ENCODE measurements at regions of chr1 and their contacts with region 1.

Region 1: DNA sequence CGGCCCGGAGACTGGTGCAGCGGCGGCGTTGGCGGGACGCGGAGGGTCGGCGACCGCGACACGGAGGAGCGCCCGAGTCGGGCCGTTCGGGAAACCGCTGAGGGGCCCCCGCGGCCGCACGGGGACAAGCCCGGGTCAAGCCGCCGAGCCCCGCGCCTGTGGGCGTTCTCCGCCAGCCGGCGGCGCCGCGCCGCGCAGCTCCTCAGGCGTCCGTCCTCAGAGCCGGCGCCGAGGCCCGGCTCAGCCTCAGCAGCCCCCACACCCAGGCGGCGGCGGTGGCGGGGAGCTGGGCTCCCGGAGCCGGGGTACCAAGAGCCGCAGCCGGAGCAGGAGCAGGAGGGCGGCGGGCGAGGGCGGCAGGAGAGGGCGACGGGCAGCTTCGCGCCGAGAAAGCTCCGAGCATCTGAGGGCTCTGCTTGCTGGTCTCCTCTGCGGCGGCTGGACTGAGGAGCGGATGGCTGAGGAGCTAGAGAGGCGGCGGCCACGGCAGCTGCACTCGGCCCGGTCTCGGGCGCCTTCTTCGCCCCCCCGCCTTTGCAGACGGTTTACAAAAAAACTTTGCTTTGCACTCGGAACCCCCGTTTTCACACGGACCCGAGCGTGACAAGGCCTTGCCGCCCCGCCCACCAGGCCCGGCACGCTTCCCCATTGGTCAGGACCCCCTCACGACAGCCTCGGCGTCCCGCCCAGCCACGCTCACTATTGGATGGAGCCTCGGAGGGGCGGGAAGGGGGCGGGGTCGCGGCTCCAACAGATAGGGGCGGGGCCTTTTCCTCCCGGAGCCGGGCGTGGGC is at the start of gene SLC30A1:
- DNase-seq: peak; percentile 99
- ATAC-seq: peak; percentile 97
- H3K4me3 ChIP-seq: peak within 1 kb of the TSS; percentile 66
- H3K4me3 Mint-ChIP-seq: peak within 1 kb of the TSS; percentile 88 to 96 (median 92)
- H3K27ac ChIP-seq: peak within 1 kb of the TSS; percentile 85
- H3K27ac Mint-ChIP-seq: peak within 1 kb of the TSS; percentile 72 to 93 (median 88)
- H3K4me1 ChIP-seq: peaks cover 3 to 5% of the 10 kb centered on the region in 2 donors
- H3K4me1 Mint-ChIP-seq: peaks cover 21 to 48% (median 44%) of the 10 kb centered on the region in 7 donors
- H3K27me3 ChIP-seq: no peaks in the 10 kb centered on the region
- H3K27me3 Mint-ChIP-seq: peaks cover 0 to 12% (median 0%) of the 10 kb centered on the region in 5 donors
- total RNA-seq, gene SLC30A1: 5.8 to 12.1 (median 8.8) TPM

Region 2: DNA sequence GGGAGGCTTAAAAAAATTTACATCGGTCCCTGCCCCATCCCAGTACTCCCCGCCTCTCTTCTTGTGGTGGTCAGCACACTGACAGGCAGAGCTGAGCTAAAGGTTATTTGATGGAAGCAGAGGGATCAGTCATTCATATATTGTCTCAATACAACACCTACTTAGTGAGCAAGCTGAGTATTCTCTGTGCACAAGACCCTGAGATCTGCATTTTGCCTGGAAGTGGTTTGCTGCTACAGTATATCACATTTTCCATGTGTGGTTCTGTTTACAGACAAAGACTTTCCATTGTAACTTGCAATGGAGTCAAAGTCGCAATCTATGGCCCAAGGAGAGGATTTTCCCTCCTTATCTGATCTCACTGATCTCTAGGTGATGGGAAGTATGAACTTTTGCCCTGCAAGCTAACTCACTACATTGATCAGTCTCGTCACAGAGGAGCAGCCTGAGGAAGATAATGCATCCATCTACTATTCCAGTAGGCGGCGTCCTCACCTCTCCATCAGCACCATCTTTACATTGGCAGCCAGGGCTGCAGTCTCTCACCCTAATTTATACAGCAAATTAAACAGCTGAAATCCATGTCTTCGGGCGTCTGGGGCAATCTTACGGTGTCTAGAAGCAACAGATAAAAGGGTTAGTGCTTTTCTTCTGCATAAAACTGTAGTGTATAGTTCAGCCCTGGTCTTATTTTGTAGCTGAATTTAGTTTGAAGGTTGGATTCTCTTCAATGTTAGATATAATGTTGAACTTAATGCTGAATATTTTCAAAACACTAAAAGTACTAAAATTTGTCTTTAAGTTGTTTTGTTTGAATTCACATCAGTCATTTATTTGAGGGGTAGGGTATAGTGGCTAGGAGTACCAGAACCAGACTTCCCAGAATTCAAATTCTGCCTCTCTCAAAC is 255.4 kb before region 1 on chr1:
- CTCF ChIA-PET with region 1: interaction called, 3 read pairs
- POLR2A ChIA-PET with region 1: no interaction called
- intact Hi-C with region 1: loop called (anchors 1 to 2 kb)
- DNase-seq: peak in 8 of 9 donors; percentile 55 to 75 (median 68)
- ATAC-seq: peak; percentile 84
- H3K4me3 ChIP-seq: no peak overlapping the region
- H3K4me3 Mint-ChIP-seq: no peak overlapping the region
- H3K27ac ChIP-seq: no peak overlapping the region
- H3K27ac Mint-ChIP-seq: no peak overlapping the region
- H3K4me1 ChIP-seq: peaks cover 7 to 20% of the 10 kb centered on the region in 2 donors
- H3K4me1 Mint-ChIP-seq: peaks cover 20 to 41% (median 35%) of the 10 kb centered on the region in 7 donors
- H3K27me3 ChIP-seq: no peaks in the 10 kb centered on the region
- H3K27me3 Mint-ChIP-seq: no peaks in the 10 kb centered on the region

Region 3: GRCh38 chr1:211606914-211607755 is 28.3 kb after region 1 on chr1:
- CTCF ChIA-PET with region 1: interaction called, 4 read pairs
- POLR2A ChIA-PET with region 1: interaction called, 6 read pairs
- intact Hi-C with region 1: loop called in 1 of 2 experiments (anchors 1 kb)
- DNase-seq: peak in 5 of 9 donors; percentile 10 to 24 (median 19)
- ATAC-seq: peak; percentile 87
- H3K4me3 ChIP-seq: peak overlapping the region; percentile 46
- H3K4me3 Mint-ChIP-seq: peak overlapping the region; percentile 59 to 87 (median 82)
- H3K27ac ChIP-seq: peak overlapping the region; percentile 24
- H3K27ac Mint-ChIP-seq: peak overlapping the region; percentile 65 to 93 (median 79)
- H3K4me1 ChIP-seq: peaks cover 0 to 5% of the 10 kb centered on the region in 2 donors
- H3K4me1 Mint-ChIP-seq: peaks cover 15 to 26% (median 23%) of the 10 kb centered on the region in 7 donors
- H3K27me3 ChIP-seq: no peaks in the 10 kb centered on the region
- H3K27me3 Mint-ChIP-seq: peaks cover 0 to 6% (median 0%) of the 10 kb centered on the region in 5 donors

Region 4: DNA sequence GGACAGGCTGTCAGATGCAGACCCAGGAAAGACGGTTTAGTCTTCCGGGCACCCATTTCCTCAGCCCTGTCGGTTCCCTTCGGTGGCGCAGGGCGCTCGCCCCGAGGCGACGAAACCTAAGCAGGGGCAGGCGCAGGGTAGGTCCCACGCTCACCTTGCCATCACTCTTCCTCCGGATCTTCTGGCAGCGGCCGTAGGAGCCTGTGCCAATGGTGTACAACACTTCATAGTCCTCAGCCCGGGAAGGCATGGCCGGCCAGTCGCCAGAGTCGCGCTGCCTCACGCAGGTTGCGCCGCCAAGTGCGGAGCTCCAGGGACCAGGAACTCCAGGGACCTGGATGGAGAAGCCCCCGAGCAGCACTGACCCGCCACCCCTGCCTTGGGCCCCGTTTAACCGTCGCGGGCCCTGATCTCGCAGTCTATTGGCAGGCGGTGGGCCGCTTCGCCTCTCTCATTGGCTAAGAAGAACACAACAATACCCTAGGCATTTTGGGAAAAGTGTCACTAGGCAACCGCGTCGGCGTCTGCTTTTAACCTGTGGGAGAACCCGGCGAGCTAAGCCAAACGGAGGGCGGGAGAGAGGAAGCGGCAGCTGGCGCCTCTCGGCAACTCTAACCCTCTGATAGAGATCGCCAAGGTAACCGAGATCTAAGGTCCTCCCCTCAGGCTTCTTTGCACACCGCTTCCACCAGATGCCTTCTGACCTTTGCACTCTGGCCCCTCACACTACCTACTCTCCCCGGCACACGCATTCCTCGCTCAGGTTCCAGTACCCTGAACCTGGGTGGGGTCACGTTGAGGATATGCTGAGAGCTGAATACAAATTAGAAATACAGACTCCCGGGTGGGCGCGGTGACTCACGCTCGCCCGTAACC is 96.6 kb after region 1 on chr1 and contains the start of gene NEK2:
- CTCF ChIA-PET with region 1: no interaction called
- POLR2A ChIA-PET with region 1: no interaction called
- intact Hi-C with region 1: loop called (anchors 1 kb)
- DNase-seq: peak; percentile 53 to 90 (median 85)
- ATAC-seq: peak; percentile 97
- H3K4me3 ChIP-seq: peak within 1 kb of the TSS; percentile 76
- H3K4me3 Mint-ChIP-seq: peak within 1 kb of the TSS; percentile 88 to 96 (median 92)
- H3K27ac ChIP-seq: peak within 1 kb of the TSS; percentile 56
- H3K27ac Mint-ChIP-seq: peak within 1 kb of the TSS; percentile 45 to 88 (median 80)
- H3K4me1 ChIP-seq: peaks cover 5 to 7% of the 10 kb centered on the region in 2 donors
- H3K4me1 Mint-ChIP-seq: peaks cover 8 to 38% (median 13%) of the 10 kb centered on the region in 7 donors
- H3K27me3 ChIP-seq: no peaks in the 10 kb centered on the region
- H3K27me3 Mint-ChIP-seq: no peaks in the 10 kb centered on the region
- total RNA-seq, gene NEK2: 0.16 to 26.5 (median 0.25) TPM in 4 of 5 experiments, not detected in the other

Region 5: DNA sequence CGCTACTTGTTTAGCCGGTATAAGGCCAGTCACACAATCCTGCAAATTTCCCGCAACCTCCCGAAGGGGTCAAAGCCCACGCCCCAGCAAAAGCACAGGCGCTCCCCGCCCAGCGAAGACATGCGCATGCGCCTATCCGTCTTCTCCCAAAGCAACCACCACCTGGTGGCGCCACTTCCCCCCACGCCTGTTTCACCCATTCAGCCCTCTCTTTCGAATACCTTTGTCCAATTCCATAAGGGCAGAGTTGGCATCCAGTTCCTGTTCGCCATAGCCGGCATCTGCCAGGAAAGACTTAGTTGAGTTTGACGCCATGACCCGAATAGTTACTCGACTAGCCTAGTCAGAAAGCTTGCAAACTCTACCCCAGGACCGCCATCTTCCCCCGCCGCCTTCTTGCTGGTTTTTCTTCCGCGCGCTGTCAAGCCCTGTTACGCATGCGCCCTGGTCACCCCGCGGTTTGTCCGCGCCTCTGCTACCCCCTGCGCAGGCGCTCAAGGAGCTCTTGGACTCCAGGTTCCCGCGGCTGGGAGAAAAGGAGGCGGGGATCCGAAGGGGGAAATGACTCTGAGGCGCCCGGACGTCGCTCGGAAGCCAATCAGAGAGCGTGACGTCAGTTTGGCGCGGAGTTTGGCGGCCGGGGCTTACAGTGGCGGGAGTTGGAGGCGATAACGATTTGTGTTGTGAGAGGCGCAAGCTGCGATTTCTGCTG is 456.4 kb after region 1 on chr1 and contains the starts of genes DTL and INTS7:
- CTCF ChIA-PET with region 1: no interaction called
- POLR2A ChIA-PET with region 1: no interaction called
- intact Hi-C with region 1: loop called (anchors 1 kb)
- DNase-seq: peak; percentile 94 to 99 (median 99)
- ATAC-seq: peak; percentile 93
- H3K4me3 ChIP-seq: peak within 1 kb of the TSS; percentile 99
- H3K4me3 Mint-ChIP-seq: peak within 1 kb of the TSS; percentile 86 to 100 (median 98)
- H3K27ac ChIP-seq: peak within 1 kb of the TSS; percentile 70
- H3K27ac Mint-ChIP-seq: peak within 1 kb of the TSS; percentile 95 to 99 (median 98)
- H3K4me1 ChIP-seq: peaks cover 20 to 23% of the 10 kb centered on the region in 2 donors
- H3K4me1 Mint-ChIP-seq: peaks cover 18 to 68% (median 54%) of the 10 kb centered on the region in 7 donors
- H3K27me3 ChIP-seq: no peaks in the 10 kb centered on the region
- H3K27me3 Mint-ChIP-seq: peaks cover 0 to 5% (median 0%) of the 10 kb centered on the region in 5 donors
- total RNA-seq, gene DTL: 0.27 to 63.0 (median 0.78) TPM
- total RNA-seq, gene INTS7: 7.3 to 33.5 (median 8.6) TPM

Region 6: DNA sequence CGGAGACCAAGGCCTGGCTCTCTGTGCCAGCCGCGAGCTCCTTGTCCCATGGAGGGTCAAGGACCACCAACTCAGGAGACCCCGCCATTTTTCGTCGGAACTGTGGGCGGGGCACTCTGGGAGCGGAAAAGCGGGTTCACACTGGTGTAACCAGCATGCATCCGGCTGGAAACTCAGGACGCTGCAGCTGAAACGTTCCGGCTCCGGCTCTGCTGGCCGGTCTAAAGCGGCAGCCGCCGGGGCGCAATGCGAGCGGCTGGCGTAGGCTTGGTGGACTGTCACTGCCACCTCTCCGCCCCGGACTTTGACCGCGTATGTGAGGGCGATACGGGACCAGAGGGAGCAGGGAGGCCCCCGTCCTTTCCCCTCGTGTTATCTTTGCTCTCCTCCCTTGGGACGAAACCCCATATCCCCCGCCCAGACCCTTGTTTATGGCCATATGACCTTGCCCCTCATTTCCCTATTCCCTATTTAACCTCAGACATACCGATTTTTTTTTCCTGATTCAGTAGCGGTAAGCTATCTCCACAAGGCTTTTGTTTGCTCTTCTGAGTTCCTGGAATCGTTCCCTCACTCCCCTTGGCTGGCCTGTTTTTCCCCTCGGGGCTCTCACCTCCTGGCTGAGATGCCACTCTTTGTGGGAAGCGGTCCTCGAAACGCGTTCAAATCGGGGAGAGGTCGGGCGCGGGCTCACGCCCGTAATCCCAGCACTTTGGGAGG is 1213.0 kb after region 1 on chr1 and contains the starts of genes NSL1 and TATDN3:
- CTCF ChIA-PET with region 1: no interaction called
- POLR2A ChIA-PET with region 1: no interaction called
- intact Hi-C with region 1: loop called (anchors 1 to 5 kb)
- DNase-seq: peak; percentile 82 to 99 (median 92)
- ATAC-seq: peak; percentile 98
- H3K4me3 ChIP-seq: peak within 1 kb of the TSS; percentile 100
- H3K4me3 Mint-ChIP-seq: peak within 1 kb of the TSS; percentile 86 to 98 (median 95)
- H3K27ac ChIP-seq: peak within 1 kb of the TSS; percentile 83
- H3K27ac Mint-ChIP-seq: peak within 1 kb of the TSS; percentile 87 to 99 (median 96)
- H3K4me1 ChIP-seq: peaks cover 17 to 19% of the 10 kb centered on the region in 2 donors
- H3K4me1 Mint-ChIP-seq: peaks cover 27 to 58% (median 43%) of the 10 kb centered on the region in 7 donors
- H3K27me3 ChIP-seq: no peaks in the 10 kb centered on the region
- H3K27me3 Mint-ChIP-seq: no peaks in the 10 kb centered on the region
- total RNA-seq, gene NSL1: 22.3 to 42.3 (median 37.7) TPM
- total RNA-seq, gene TATDN3: 10.0 to 17.7 (median 13.9) TPM

Region 7: GRCh38 chr1:213051127-213051880 is 1472.5 kb after region 1 on chr1 and contains the start of gene RPS6KC1:
- CTCF ChIA-PET with region 1: no interaction called
- POLR2A ChIA-PET with region 1: no interaction called
- intact Hi-C with region 1: loop called in 1 of 2 experiments (anchors 2 kb)
- DNase-seq: peak; percentile 64 to 82 (median 79)
- ATAC-seq: peak; percentile 97
- H3K4me3 ChIP-seq: peak within 1 kb of the TSS; percentile 97
- H3K4me3 Mint-ChIP-seq: peak within 1 kb of the TSS; percentile 93 to 99 (median 96)
- H3K27ac ChIP-seq: peak within 1 kb of the TSS; percentile 72
- H3K27ac Mint-ChIP-seq: peak within 1 kb of the TSS; percentile 75 to 98 (median 93)
- H3K4me1 ChIP-seq: peaks cover 0 to 13% of the 10 kb centered on the region in 2 donors
- H3K4me1 Mint-ChIP-seq: peaks cover 23 to 39% (median 35%) of the 10 kb centered on the region in 7 donors
- H3K27me3 ChIP-seq: peaks cover 0 to 4% of the 10 kb centered on the region in 2 donors
- H3K27me3 Mint-ChIP-seq: peaks cover 9 to 27% (median 23%) of the 10 kb centered on the region in 5 donors
- total RNA-seq, gene RPS6KC1: 9.1 to 18.9 (median 14.3) TPM

Measured in naive thymus-derived CD4-positive, alpha-beta T cell (primary cell).